Breast epithelium (tissue), 4 donors: ENCODE measurements at regions of chr1 and their contacts with region 1.

Region 1: GRCh38 chr1:106548726-106549125 is 507.7 kb upstream of the PRMT6 start:
- DNase-seq: no peak
- H3K4me3 ChIP-seq: no peak overlapping the region
- H3K27ac ChIP-seq: no peak overlapping the region
- H3K4me1 ChIP-seq: no peaks in the 10 kb centered on the region
- H3K27me3 ChIP-seq: no peaks in the 10 kb centered on the region
- CTCF ChIP-seq: no peak
- POLR2A ChIP-seq: no peak

Region 2: GRCh38 chr1:106523497-106523896 is 25.2 kb before region 1 on chr1:
- intact Hi-C with region 1: no loop called
- DNase-seq: no peak
- H3K4me3 ChIP-seq: no peak overlapping the region
- H3K27ac ChIP-seq: no peak overlapping the region
- H3K4me1 ChIP-seq: no peaks in the 10 kb centered on the region
- H3K27me3 ChIP-seq: no peaks in the 10 kb centered on the region
- CTCF ChIP-seq: no peak
- POLR2A ChIP-seq: no peak

Region 3: DNA sequence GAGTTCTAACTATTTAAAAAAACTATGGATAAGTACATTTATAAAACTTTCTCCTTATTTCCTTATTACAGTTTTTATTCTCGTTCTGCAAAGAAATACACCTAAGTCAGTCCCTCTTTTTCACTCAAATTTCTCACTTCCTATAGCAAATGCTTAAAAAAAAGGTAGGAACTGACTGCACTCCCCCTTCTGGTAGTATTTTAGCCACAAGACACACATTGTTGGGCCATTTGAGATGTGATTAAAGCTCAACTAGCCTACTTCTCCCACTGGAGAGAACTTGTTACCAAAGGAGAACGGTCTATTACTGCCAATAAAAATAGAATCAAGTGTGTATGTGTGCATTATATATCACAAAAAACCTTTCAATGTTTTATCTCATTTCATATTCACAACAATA is 14.1 kb before region 1 on chr1:
- intact Hi-C with region 1: loop called (anchors 1 kb)
- DNase-seq: no peak
- H3K4me3 ChIP-seq: no peak overlapping the region
- H3K27ac ChIP-seq: no peak overlapping the region
- H3K4me1 ChIP-seq: no peaks in the 10 kb centered on the region
- H3K27me3 ChIP-seq: no peaks in the 10 kb centered on the region
- CTCF ChIP-seq: no peak
- POLR2A ChIP-seq: no peak

Region 4: DNA sequence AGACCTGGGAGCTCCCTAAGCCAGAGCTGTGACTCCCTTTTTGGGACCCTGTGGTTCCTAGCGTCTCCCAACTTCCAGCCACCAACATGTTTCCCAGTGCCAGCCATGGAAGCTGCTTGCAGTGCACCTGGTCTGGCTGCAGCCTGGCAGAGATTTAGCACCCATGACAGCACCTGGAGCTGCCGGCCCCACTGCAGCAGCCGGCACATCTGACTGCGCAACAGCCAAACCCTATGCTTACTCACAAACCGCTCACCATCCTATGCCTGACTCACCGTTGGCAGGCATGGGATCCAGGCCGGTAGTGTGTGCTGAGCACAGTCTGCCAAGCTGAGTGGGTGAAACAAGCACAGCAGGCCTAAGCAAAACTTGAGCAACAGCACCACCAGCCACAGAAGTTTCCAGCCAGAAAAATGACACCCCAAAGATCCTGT is 71.8 kb after region 1 on chr1:
- intact Hi-C with region 1: no loop called
- DNase-seq: no peak
- H3K4me3 ChIP-seq: no peak overlapping the region
- H3K27ac ChIP-seq: no peak overlapping the region
- H3K4me1 ChIP-seq: no peaks in the 10 kb centered on the region
- H3K27me3 ChIP-seq: no peaks in the 10 kb centered on the region
- CTCF ChIP-seq: no peak
- POLR2A ChIP-seq: no peak